Dorsolateral prefrontal cortex (tissue), 120 donors: ENCODE measurements at regions of chr5 and their contacts with region 1.

Region 1: GRCh38 chr5:136249678-136250266 is 56.8 kb upstream of the SMIM32 start:
- DNase-seq: peak; percentile 52 to 77 (median 69)
- H3K4me3 ChIP-seq: no peak overlapping the region
- H3K27ac ChIP-seq: no peak overlapping the region
- H3K27me3 ChIP-seq: peaks cover 0 to 8% (median 0%) of the 10 kb centered on the region in 45 donors
- CTCF ChIP-seq: peak; percentile 51 to 94 (median 82)

Region 2: GRCh38 chr5:136424835-136425584 is 175.2 kb after region 1 on chr5:
- intact Hi-C with region 1: loop called (anchors 5 kb)
- DNase-seq: peak; percentile 22 to 82 (median 70)
- H3K4me3 ChIP-seq: no peak overlapping the region
- H3K27ac ChIP-seq: no peak overlapping the region
- H3K27me3 ChIP-seq: peaks cover 0 to 2% (median 0%) of the 10 kb centered on the region in 45 donors
- CTCF ChIP-seq: peak; percentile 34 to 82 (median 70)